Dorsolateral prefrontal cortex (tissue), 120 donors: ENCODE measurements at regions of chr3 and their contacts with region 1.

Region 1: DNA sequence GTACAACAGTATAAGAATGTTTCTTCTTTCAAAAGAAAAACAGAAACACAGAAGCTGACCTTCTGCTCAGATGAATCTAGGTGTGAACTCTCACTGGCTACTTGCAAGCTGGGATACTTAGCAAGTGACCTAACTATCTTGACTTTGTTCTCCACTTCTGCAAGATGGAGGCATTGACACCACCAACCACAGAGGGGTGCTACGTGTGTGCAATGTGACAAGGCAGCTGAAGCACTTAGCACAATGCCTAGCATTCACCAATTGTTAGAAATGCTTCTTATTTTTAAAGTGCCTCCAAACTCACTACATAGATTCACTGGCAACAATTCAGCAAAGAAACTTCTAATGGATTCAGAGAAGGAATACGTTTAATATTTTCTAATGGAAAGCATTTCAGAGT is 331.4 kb upstream of the WNT5A start:
- DNase-seq: peak in 5 of 10 donors; percentile 21 to 70 (median 40)
- H3K4me3 ChIP-seq: no peak overlapping the region
- H3K27ac ChIP-seq: no peak overlapping the region
- H3K27me3 ChIP-seq: no peaks in the 10 kb centered on the region
- CTCF ChIP-seq: peak in 52 of 56 donors; percentile 17 to 76 (median 46)

Region 2: GRCh38 chr3:56042326-56042951 is 224.0 kb after region 1 on chr3:
- intact Hi-C with region 1: loop called in 1 of 2 experiments (anchors 5 kb)
- DNase-seq: peak in 1 of 10 donors; percentile 12
- H3K4me3 ChIP-seq: no peak overlapping the region
- H3K27ac ChIP-seq: no peak overlapping the region
- H3K27me3 ChIP-seq: no peaks in the 10 kb centered on the region
- CTCF ChIP-seq: peak; percentile 23 to 79 (median 64)

Region 3: DNA sequence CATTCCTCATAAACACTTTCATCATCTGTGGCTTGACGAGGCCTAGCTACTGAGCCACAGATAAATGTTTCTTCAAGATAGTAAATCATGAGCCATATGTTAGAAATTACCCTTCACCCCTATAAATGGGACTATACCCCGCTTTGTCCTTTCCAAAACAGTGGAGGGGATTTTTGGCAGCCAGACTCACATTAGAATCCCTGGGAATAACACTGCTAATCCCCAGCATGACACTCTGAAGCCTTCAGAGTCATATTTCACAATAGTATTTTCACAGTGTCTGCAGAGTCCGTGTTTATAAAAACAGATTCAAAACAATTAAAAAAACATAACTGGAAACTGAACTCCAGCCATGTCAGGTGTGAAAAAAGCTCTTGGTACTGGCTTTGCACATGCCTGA is 378.2 kb after region 1 on chr3:
- intact Hi-C with region 1: no loop called
- DNase-seq: no peak
- H3K4me3 ChIP-seq: no peak overlapping the region
- H3K27ac ChIP-seq: no peak overlapping the region
- H3K27me3 ChIP-seq: no peaks in the 10 kb centered on the region
- CTCF ChIP-seq: no peak

Region 4: GRCh38 chr3:56251343-56251945 is 433.0 kb after region 1 on chr3:
- intact Hi-C with region 1: loop called in 1 of 2 experiments (anchors 10 kb)
- DNase-seq: peak in 2 of 10 donors; percentile 39 to 42
- H3K4me3 ChIP-seq: no peak overlapping the region
- H3K27ac ChIP-seq: no peak overlapping the region
- H3K27me3 ChIP-seq: no peaks in the 10 kb centered on the region
- CTCF ChIP-seq: peak; percentile 65 to 94 (median 85)